ENCODE measurements at regions of chr1 and their contacts with region 1.

Region 1: GRCh38 chr1:232684363-232685105 is 54.6 kb upstream of the SIPA1L2 start:
- DNase-seq: no peak
- H3K4me3 ChIP-seq: no peak overlapping the region
- H3K27ac ChIP-seq: no peak overlapping the region
- H3K4me1 ChIP-seq: no peaks in the 10 kb centered on the region
- H3K27me3 ChIP-seq: no peaks in the 10 kb centered on the region
- CTCF ChIP-seq: no peak

Region 2: DNA sequence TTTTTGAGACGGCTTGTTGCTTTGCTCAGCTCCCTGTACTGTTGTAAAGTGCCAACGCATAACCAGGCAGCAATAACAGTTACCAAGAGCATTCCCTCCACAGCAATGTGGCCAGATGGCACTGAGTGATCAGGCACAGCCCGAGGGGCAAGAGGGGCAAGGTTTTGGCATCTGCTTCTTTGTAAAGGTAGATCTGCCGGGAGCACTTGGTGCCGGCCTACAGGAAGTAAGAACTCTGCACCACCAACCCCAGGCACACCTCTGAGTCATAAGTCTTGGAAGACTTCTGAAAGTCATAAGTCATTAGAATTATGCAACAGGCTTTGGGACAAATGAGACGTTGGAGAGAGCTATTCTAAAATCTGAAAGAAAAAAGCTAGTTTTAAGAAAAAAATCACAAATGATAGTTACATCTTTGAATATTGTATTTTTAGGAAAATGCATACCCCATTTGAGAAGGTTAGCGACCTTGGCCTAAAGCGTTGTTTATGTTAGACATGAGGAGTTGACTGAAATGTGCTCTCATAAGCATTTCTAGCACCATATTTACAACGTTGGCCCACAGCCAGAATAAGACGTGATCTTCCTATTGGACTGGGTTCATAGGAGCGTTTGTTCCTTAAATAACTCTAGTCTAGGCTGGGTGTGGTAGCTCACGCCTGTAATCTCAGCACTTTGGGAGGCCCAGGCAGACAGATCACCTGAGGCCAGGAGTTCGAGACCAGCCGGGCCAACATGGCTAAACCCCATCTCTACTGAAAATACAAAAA is 83.0 kb after region 1 on chr1:
- intact Hi-C with region 1: loop called (anchors 10 kb)
- DNase-seq: peak; percentile 90
- H3K4me3 ChIP-seq: no peak overlapping the region
- H3K27ac ChIP-seq: peak overlapping the region; percentile 88
- H3K4me1 ChIP-seq: no peaks in the 10 kb centered on the region
- H3K27me3 ChIP-seq: no peaks in the 10 kb centered on the region
- CTCF ChIP-seq: no peak

Region 3: DNA sequence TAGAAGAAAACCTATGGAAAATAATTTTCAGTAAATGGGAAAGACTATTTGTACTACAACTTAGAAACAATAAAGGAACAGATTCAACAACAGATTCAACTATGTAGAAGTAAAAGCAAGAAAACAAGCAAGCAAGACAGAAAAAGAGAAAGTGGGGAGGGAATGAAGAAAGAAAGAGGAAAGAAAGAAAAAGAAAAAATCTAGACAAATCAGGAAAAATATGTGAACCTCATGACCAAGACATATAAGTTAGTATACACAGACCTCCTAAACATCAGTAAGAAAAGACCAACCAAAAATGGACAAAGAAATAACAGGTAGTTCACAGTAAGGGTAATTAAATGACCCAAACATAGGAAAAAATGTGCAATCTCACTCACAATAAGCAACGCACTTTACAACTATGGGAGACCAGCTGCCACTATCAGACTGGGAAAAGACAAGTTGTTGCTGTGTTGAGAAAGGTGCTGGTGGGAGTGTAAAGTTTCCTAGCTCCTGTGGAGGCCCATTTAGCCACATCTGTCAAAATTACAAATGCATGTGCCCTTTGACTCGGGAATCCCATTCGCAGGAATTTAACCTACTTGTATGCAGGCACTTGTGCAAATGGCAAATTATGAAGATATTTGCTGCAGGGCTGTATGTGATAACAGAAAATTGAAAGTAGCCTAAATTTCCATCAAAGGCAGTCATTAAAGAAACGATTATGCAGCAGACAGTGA is 629.1 kb after region 1 on chr1:
- intact Hi-C with region 1: no loop called
- DNase-seq: no peak
- H3K4me3 ChIP-seq: no peak overlapping the region
- H3K27ac ChIP-seq: no peak overlapping the region
- H3K4me1 ChIP-seq: no peaks in the 10 kb centered on the region
- H3K27me3 ChIP-seq: no peaks in the 10 kb centered on the region
- CTCF ChIP-seq: no peak